ENCODE measurements at regions of chr2 and their contacts with region 1.

Region 1: DNA sequence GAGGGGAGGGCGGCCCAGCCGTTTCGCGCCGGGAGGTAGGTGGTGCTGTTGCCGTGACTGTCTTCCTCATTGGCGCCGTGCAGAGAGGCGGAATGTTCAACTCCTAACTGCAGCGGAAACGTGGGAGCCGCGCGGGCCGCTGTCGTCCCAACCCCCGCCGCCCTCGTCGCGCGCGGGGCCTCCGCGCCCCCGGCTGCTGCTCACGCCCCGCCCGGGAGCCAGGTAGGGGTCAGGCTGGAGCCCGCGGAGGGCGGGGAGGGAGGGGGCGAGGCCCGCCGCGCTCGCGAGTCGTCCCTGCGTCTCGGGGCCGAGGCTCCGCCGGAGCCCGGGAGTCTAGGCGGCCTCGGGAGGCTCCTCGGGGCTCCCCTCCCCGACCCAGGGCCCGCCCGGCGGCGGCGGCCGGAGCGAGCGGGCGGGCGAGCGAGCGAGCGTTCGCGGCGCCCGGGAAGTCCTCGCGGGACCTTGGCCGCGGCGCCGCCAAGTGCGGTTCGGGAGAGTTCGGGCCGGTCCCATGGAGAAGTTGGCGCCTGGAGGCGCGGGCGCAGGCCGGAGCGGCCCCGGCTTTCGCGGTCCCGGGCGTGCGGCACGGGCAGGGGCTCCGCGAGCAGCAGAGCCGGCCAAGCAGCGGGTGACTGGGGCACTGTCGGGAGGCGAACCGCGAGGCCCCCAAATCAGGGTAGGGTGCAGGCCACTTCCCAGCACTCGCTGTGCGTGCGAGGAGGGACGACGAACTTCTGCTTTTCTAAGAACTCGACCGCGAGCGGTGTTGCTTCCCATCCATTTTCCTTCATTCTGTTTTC is at the start of gene MAP3K20:
- DNase-seq: peak; percentile 70
- H3K4me3 ChIP-seq: peak within 1 kb of the TSS; percentile 61 to 87 (median 72)
- H3K27ac ChIP-seq: peak within 1 kb of the TSS; percentile 88 to 96 (median 92)
- H3K4me1 ChIP-seq: peaks cover 0 to 26% (median 14%) of the 10 kb centered on the region in 4 donors
- H3K27me3 ChIP-seq: peaks cover 3% of the 10 kb centered on the region
- CTCF ChIP-seq: peak in 4 of 5 experiments; percentile 18 to 34 (median 28)
- EP300 ChIP-seq: no peak
- POLR2A ChIP-seq: no peak
- total RNA-seq, gene MAP3K20: 24.7 to 40.2 (median 33.8) TPM

Region 2: DNA sequence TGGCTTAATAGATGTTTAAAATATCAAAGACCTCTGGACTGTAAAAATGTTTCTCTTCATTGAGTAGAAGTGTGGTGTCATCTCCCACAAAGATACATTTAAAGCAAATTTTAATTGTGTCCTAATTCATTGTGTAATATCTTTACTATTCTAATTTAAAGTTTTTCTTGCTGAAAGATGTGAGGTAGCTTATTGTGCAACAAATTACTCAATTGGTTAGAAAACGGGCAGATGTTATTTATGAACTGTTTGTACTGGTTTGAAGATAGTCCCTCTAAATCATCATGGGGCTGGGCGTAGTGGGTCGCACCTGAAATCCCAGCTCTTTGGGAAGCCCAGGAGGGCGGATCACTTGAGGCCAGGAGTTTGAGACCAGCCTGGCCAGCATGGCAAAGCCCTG is 1488.4 kb before region 1 on chr2:
- in situ Hi-C with region 1: no loop called
- intact Hi-C with region 1: no loop called
- DNase-seq: no peak
- H3K4me3 ChIP-seq: no peak overlapping the region
- H3K27ac ChIP-seq: no peak overlapping the region
- H3K4me1 ChIP-seq: no peaks in the 10 kb centered on the region
- H3K27me3 ChIP-seq: peaks cover 16% of the 10 kb centered on the region
- CTCF ChIP-seq: no peak
- EP300 ChIP-seq: no peak
- POLR2A ChIP-seq: no peak

Region 3: DNA sequence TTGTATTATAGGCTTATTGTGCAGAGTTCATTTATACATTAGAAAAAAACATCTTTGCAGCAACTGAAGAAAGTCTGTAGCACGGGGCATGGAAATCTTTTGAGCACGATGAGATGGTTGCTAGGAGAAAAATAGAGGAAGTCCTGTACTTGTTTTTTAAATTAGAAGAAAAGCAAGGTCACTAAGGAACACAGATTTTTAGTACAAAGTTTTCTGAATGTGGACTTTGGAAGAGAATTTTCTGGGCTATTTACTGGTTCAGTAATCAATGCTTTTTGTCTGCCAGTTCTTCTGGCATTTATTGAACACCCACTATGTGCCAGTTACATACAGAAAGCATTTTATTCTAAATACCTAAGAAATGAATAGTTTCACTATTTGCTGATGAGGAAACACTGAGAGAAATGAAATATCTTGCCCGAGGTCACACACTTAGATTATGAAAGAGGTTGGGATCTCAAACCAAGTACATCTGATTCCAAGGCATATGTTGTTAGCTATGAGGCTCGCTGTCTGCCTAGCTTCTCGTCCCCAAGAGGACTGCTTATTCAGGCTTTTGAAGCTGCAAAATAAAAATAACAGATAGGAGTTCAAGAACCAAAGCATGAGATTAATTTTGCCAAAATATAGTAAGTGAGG is 15.9 kb before region 1 on chr2:
- in situ Hi-C with region 1: no loop called
- intact Hi-C with region 1: no loop called
- DNase-seq: no peak
- H3K4me3 ChIP-seq: no peak overlapping the region
- H3K27ac ChIP-seq: no peak overlapping the region
- H3K4me1 ChIP-seq: no peaks in the 10 kb centered on the region
- H3K27me3 ChIP-seq: no peaks in the 10 kb centered on the region
- CTCF ChIP-seq: no peak
- EP300 ChIP-seq: no peak
- POLR2A ChIP-seq: no peak

Region 4: DNA sequence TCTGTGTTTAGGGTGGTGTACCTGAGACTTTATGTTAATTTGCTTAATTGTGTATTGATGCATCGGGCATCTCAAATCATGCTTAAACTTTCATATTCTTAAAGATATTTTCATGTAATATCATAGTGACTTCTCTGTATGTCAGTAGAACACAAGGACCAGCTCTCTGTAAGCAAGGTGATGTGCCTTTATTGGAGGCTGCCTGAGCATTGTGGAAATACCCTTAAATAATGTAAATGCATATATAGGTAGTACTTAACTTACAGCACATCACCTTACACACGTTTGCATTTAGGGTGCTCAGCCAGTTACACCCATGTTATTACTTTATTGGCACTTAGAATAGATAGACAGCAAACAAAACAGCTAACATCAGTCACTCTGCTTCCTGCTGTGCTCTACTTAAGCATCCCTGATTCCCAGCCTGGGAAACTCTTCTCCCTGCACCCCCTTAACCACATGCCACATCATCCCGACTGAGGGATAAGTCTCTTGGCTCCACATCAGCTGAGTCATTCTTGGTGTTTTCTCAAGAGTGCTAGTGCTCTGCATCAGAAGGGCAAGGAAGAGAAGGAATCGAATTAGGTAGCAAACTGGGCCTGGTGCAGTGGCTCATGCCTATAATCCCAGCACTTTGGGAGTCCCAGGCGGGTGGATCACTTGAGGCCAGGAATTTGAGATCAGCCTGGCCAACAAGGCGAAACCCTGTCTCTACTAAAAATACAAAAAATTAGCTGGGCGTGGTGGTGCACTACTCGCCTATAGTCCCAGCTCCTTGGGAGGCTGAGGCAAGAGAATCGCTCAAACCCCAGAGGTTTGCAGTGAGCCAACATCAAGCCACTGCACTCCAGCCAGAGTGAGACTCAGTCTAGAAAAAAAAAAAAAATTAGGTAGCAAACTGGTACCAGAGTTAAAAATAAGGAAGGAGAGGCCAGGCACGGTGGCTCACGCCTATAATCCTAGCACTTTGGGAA is 108.3 kb after region 1 on chr2:
- in situ Hi-C with region 1: loop called in 1 of 4 experiments (anchors 25 kb)
- intact Hi-C with region 1: no loop called
- DNase-seq: peak; percentile 35
- H3K4me3 ChIP-seq: no peak overlapping the region
- H3K27ac ChIP-seq: peak overlapping the region; percentile 60 to 73 (median 66)
- H3K4me1 ChIP-seq: peaks cover 0 to 23% (median 4%) of the 10 kb centered on the region in 4 donors
- H3K27me3 ChIP-seq: no peaks in the 10 kb centered on the region
- CTCF ChIP-seq: no peak
- EP300 ChIP-seq: no peak
- POLR2A ChIP-seq: no peak